Heart right ventricle (tissue), 16 donors: ENCODE measurements at regions of chr4 and their contacts with region 1.

Region 1: DNA sequence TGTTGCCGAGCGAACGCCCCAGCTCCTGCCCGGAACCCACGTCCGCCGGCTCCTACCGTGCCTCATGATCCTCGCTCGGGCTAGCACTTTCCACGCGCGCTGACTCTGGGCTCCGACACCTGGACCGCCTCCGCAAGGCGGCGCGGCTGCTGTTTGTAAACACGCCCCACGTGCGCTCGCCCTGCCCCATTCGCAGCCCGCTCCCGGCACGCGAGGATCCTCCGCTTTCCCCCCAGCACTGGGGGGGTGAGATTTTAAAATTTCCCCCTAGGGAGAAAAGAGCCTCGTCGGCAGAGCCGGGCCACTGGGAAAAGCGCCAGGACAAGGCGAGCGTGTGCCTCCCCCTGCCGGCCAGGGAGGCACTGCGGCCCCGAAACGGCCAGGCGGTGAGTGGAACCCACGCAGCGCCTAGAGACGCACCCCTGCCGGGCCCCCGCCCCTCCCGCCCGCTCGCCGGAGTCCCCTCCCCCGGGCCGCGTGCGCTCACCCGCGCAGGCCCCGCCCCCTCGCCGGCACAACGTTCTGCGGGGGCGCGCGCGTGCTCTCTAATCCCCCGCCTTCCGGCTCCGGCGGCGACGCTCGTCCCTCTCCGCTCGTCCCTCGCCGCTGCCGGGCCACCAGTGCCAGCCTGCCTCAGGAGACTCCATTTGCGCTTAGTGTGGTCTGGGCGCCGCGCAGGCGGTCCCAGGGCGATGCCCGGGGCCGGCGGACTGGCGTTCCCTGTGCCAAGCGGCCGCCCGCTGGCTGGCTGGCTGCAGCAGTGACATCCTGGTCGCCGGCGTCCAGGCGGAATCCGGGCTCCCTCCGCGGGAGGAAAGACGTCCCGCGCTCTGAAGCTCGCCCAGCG is at the start of gene TIGD2:
- DNase-seq: peak; percentile 84 to 89
- ATAC-seq: peak; percentile 97 to 99 (median 98)
- H3K4me3 ChIP-seq: peak within 1 kb of the TSS; percentile 56 to 92 (median 73)
- H3K27ac ChIP-seq: peak within 1 kb of the TSS in 9 of 10 donors; percentile 73 to 89 (median 83)
- H3K4me1 ChIP-seq: peaks cover 0 to 26% (median 14%) of the 10 kb centered on the region in 9 donors
- H3K27me3 ChIP-seq: peaks cover 0 to 15% (median 0%) of the 10 kb centered on the region in 7 donors
- CTCF ChIP-seq: peak; percentile 74 to 91 (median 85)
- total RNA-seq, gene TIGD2: 1.2 to 2.8 (median 2.0) TPM

Region 2: GRCh38 chr4:89056953-89057398 is 54.2 kb before region 1 on chr4 and contains the start of gene FAM13A:
- intact Hi-C with region 1: loop called in 1 of 10 experiments (anchors 2 kb)
- DNase-seq: peak; percentile 41 to 84
- ATAC-seq: peak; percentile 89 to 97 (median 96)
- H3K4me3 ChIP-seq: peak within 1 kb of the TSS; percentile 18 to 60 (median 46)
- H3K27ac ChIP-seq: peak within 1 kb of the TSS in 8 of 10 donors; percentile 37 to 66 (median 57)
- H3K4me1 ChIP-seq: peaks cover 0 to 26% (median 16%) of the 10 kb centered on the region in 9 donors
- H3K27me3 ChIP-seq: no peaks in the 10 kb centered on the region
- CTCF ChIP-seq: no peak
- total RNA-seq, gene FAM13A: 6.7 to 18.4 (median 14.9) TPM

Region 3: GRCh38 chr4:89069481-89069880 is 41.7 kb before region 1 on chr4:
- intact Hi-C with region 1: no loop called
- DNase-seq: no peak
- ATAC-seq: no peak
- H3K4me3 ChIP-seq: no peak overlapping the region
- H3K27ac ChIP-seq: no peak overlapping the region
- H3K4me1 ChIP-seq: no peaks in the 10 kb centered on the region
- H3K27me3 ChIP-seq: no peaks in the 10 kb centered on the region
- CTCF ChIP-seq: no peak

Region 4: DNA sequence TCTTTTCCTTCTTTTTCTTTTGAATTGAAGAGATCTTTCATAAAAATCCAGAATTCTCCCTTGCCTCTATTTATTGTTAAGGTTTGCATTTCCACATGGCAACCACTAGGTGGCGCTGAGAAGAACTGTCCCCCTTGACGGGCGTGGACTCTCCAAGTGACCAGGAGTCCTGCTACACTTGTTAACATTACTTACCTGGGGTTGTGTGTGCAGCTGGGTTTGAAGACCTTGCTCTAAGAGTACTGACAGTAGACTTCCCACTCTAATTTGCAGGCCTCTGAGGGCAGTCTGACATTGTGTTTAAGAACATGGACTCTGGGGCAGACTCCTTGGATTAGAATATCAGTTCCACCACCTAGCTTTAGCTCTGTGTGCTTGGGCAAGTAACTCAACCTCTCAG is 143.6 kb after region 1 on chr4:
- intact Hi-C with region 1: no loop called
- DNase-seq: no peak
- ATAC-seq: peak in 4 of 8 donors; percentile 39 to 43 (median 41)
- H3K4me3 ChIP-seq: no peak overlapping the region
- H3K27ac ChIP-seq: peak overlapping the region in 1 of 10 donors; percentile 13
- H3K4me1 ChIP-seq: peaks cover 2 to 54% (median 25%) of the 10 kb centered on the region in 9 donors
- H3K27me3 ChIP-seq: no peaks in the 10 kb centered on the region
- CTCF ChIP-seq: peak; percentile 10 to 78 (median 66)